IMR-90 (cell line): ENCODE measurements at regions of chr3 and their contacts with region 1.

Region 1: DNA sequence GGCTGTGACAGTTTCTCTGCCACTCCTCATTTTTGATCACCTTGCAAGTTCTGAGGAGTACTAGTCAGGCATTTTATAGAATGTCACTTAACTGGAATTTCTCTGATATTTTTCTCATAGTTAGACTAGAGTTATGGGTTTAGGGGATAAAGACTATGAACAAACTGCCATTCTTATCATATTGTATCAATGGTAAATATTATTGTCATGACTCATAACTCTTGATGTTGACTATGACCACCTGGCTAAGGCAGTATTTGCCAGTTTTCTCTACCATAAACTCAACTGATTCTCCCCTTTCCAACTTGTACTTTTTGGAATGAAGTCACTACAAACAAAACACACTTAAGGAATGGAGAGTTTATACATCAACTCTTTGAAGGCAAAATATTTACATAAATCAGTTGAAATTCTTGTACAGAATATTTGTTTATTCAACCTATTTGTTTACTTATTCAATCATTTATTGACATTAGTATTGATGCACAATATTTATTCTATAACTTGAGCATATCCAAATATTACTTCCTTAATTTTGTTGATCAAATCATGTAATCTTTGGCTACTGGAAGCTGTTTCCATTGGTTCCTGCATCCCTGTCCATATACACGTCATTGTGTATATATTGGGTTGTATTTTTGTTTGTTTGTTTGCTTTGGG is 22.6 kb upstream of the OR5K1 start:
- DNase-seq: no peak
- ATAC-seq: no peak
- H3K4me3 ChIP-seq: no peak overlapping the region
- H3K27ac ChIP-seq: no peak overlapping the region
- H3K4me1 ChIP-seq: no peaks in the 10 kb centered on the region
- H3K27me3 ChIP-seq: no peaks in the 10 kb centered on the region
- CTCF ChIP-seq: no peak
- POLR2A ChIP-seq: no peak
- RAD21 ChIP-seq: no peak

Region 2: DNA sequence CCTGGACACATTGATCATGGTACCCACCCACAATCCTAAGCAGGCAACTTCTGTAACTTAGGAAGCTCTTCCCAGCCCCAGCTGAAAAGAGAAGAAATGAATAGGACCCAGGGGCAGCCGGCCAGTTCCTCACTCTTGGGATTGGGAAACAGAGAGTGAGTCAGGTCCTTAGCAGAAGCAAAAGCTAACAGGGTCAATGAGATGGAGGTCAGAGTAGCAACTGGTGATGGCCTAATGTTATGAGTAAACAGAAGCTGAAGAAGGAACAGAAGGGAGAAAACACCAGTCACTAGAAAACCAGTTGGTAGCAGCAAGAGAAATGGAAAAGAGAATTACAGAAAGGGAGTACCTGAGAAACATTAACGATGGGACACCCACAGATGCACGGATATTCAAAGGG is 488.1 kb before region 1 on chr3:
- CTCF ChIA-PET with region 1: no interaction called
- POLR2A ChIA-PET with region 1: no interaction called
- dilution Hi-C with region 1: no loop called
- in situ Hi-C with region 1: no loop called
- intact Hi-C with region 1: no loop called
- DNase-seq: peak; percentile 74
- ATAC-seq: peak; percentile 91
- H3K4me3 ChIP-seq: no peak overlapping the region
- H3K27ac ChIP-seq: no peak overlapping the region
- H3K4me1 ChIP-seq: peaks cover 5% of the 10 kb centered on the region
- H3K27me3 ChIP-seq: no peaks in the 10 kb centered on the region
- CTCF ChIP-seq: no peak
- POLR2A ChIP-seq: no peak
- RAD21 ChIP-seq: no peak

Region 3: DNA sequence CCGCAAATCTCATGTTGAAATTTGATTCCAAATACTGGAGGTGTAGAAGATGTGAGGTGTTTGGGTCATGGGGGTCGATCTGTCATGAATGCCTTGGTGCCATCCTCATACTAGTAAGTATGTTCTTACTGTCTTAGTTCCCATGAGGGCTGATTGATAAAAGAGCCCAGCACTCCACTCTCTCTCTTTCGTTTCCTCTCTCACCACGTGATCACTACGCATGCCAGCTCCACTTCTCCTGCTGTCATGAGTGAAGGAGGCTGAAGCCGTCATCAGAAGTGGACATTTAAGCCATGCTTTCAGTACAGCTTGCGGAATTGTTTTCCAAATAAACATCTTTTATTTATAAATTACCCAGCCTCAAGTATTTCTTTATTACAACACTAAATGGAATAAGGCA is 267.8 kb before region 1 on chr3:
- CTCF ChIA-PET with region 1: no interaction called
- POLR2A ChIA-PET with region 1: no interaction called
- dilution Hi-C with region 1: no loop called
- in situ Hi-C with region 1: no loop called
- intact Hi-C with region 1: no loop called
- DNase-seq: no peak
- ATAC-seq: no peak
- H3K4me3 ChIP-seq: no peak overlapping the region
- H3K27ac ChIP-seq: no peak overlapping the region
- H3K4me1 ChIP-seq: no peaks in the 10 kb centered on the region
- H3K27me3 ChIP-seq: no peaks in the 10 kb centered on the region
- CTCF ChIP-seq: no peak
- POLR2A ChIP-seq: no peak
- RAD21 ChIP-seq: no peak

Region 4: DNA sequence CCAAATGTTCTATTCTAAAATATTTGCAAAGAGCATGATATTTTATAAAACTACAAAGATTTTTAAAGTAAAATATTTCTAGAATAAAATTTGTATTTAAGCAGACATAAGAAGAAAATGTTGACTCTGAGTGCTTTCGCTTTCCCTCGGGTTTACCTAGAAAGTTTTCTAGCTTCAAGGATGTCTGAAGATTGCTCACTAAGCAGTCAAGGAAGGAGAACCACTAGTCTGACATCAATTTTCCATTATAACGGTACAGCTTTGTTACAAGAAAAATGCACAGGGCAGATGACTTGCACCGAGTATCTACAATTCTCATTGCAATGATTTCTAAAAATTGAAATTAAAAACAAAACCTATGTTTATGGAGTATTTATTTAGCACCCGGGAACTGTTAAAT is 105.5 kb after region 1 on chr3:
- CTCF ChIA-PET with region 1: no interaction called
- POLR2A ChIA-PET with region 1: no interaction called
- dilution Hi-C with region 1: no loop called
- in situ Hi-C with region 1: no loop called
- intact Hi-C with region 1: loop called (anchors 5 kb)
- DNase-seq: no peak
- ATAC-seq: no peak
- H3K4me3 ChIP-seq: no peak overlapping the region
- H3K27ac ChIP-seq: no peak overlapping the region
- H3K4me1 ChIP-seq: no peaks in the 10 kb centered on the region
- H3K27me3 ChIP-seq: peaks cover 12% of the 10 kb centered on the region
- CTCF ChIP-seq: no peak
- POLR2A ChIP-seq: no peak
- RAD21 ChIP-seq: no peak

Region 5: GRCh38 chr3:98573181-98573728 is 132.8 kb after region 1 on chr3:
- CTCF ChIA-PET with region 1: no interaction called
- POLR2A ChIA-PET with region 1: no interaction called
- dilution Hi-C with region 1: no loop called
- in situ Hi-C with region 1: no loop called
- intact Hi-C with region 1: no loop called
- DNase-seq: peak; percentile 33
- ATAC-seq: peak; percentile 46
- H3K4me3 ChIP-seq: no peak overlapping the region
- H3K27ac ChIP-seq: no peak overlapping the region
- H3K4me1 ChIP-seq: peaks cover 2% of the 10 kb centered on the region; the same call in 1 of the 2 replicates
- H3K27me3 ChIP-seq: no peaks in the 10 kb centered on the region
- CTCF ChIP-seq: peak; percentile 51
- POLR2A ChIP-seq: no peak
- RAD21 ChIP-seq: peak; percentile 37

Region 6: GRCh38 chr3:98744283-98744682 is 303.9 kb after region 1 on chr3:
- CTCF ChIA-PET with region 1: no interaction called
- POLR2A ChIA-PET with region 1: no interaction called
- dilution Hi-C with region 1: no loop called
- in situ Hi-C with region 1: no loop called
- intact Hi-C with region 1: no loop called
- DNase-seq: no peak
- ATAC-seq: no peak
- H3K4me3 ChIP-seq: no peak overlapping the region
- H3K27ac ChIP-seq: no peak overlapping the region
- H3K4me1 ChIP-seq: no peaks in the 10 kb centered on the region
- H3K27me3 ChIP-seq: no peaks in the 10 kb centered on the region; the same call in 1 of the 2 replicates
- CTCF ChIP-seq: no peak
- POLR2A ChIP-seq: no peak
- RAD21 ChIP-seq: no peak